Activated CD4-positive, alpha-beta T cell treated with anti-CD3 and anti-CD28 coated beads, Interleukin-2, amount 10 ng/mL, durations not matched to agents 24 days and 14 days (primary cell): ENCODE measurements at regions of chr4 and their contacts with region 1.

Region 1: DNA sequence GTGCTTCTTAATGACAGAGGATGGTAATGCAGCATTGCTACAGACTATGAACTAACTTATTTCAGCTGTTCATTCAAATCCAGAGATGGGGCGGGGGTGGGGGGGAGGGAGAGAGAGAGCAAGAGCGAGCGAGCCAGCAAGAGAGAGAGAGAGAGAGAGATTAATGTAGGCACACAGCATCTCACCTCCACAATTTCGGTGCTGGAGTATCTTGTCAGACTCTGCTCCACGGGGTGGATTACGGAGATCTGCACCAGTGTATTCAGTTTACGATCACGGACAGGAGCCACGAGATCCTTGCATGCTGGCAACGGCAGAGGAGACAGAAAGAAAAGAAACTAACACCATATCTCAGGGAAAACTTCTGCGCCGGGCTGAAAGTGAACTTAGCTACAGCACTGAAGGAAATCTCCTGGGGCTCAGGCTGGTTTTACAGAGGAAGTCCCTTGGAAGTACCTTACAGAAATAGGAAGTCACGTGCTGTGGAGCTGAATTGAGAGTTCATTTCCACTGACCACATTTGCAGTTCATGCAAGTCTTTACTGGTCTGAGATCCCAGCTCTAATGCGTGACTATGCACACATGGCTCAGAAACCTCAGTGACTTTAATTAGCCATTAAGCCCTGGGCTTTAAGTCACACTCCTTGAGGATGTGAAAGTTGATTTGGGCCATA is 440.9 kb downstream of the INPP4B start:
- DNase-seq: peak; percentile 88
- H3K4me3 Mint-ChIP-seq: peak overlapping the region; percentile 95
- H3K27ac Mint-ChIP-seq: peak overlapping the region; percentile 100
- H3K4me1 Mint-ChIP-seq: peaks cover 57% of the 10 kb centered on the region
- H3K27me3 Mint-ChIP-seq: no peaks in the 10 kb centered on the region

Region 2: DNA sequence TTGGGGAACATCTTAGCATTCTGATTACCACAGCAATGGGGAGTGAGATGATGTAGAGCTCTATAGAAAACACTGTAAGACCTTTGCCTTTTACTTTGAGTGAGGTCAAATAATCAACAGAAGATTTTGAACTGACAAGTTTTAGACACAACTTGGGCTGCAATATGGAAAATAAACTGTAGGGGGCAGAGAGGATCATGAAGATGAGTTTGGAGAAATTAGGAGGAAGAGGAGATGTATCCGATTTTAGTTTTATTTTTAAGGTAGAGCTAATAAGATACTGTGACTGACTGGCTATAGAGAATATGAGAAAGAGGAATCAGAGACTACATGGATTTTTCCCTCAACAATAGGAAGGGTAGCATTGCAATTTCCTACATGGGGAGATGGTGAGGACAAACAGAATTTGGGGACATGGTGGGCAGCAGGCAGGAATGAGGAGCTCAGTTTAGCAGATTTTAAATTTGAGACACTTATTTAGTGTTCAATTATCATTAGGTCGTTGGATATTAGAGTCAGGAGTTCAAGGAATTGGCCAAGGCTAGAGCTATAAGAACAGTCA is 122.2 kb before region 1 on chr4:
- intact Hi-C with region 1: loop called (anchors 5 kb)
- DNase-seq: peak; percentile 84
- H3K4me3 Mint-ChIP-seq: no peak overlapping the region
- H3K27ac Mint-ChIP-seq: no peak overlapping the region
- H3K4me1 Mint-ChIP-seq: peaks cover 10% of the 10 kb centered on the region
- H3K27me3 Mint-ChIP-seq: no peaks in the 10 kb centered on the region

Region 3: GRCh38 chr4:142379277-142380057 is 25.7 kb before region 1 on chr4:
- intact Hi-C with region 1: loop called (anchors 1 kb)
- DNase-seq: no peak
- H3K4me3 Mint-ChIP-seq: no peak overlapping the region
- H3K27ac Mint-ChIP-seq: peak overlapping the region; percentile 77
- H3K4me1 Mint-ChIP-seq: peaks cover 51% of the 10 kb centered on the region
- H3K27me3 Mint-ChIP-seq: no peaks in the 10 kb centered on the region

Region 4: GRCh38 chr4:142556048-142556447 is 150.9 kb after region 1 on chr4:
- intact Hi-C with region 1: loop called (anchors 2 kb)
- DNase-seq: no peak
- H3K4me3 Mint-ChIP-seq: peak overlapping the region; percentile 64
- H3K27ac Mint-ChIP-seq: peak overlapping the region; percentile 83
- H3K4me1 Mint-ChIP-seq: peaks cover 63% of the 10 kb centered on the region
- H3K27me3 Mint-ChIP-seq: no peaks in the 10 kb centered on the region

Region 5: GRCh38 chr4:142824368-142824767 is 419.2 kb after region 1 on chr4:
- intact Hi-C with region 1: loop called (anchors 5 kb)
- DNase-seq: no peak
- H3K4me3 Mint-ChIP-seq: no peak overlapping the region
- H3K27ac Mint-ChIP-seq: no peak overlapping the region
- H3K4me1 Mint-ChIP-seq: peaks cover 6% of the 10 kb centered on the region
- H3K27me3 Mint-ChIP-seq: no peaks in the 10 kb centered on the region